ENCODE measurements at regions of chr19 and their contacts with region 1.

Region 1: GRCh38 chr19:6740589-6741343 is 1.3 kb downstream of the TRIP10 start:
- DNase-seq: peak; percentile 42 to 50 (median 49)
- ATAC-seq: no peak
- H3K4me3 ChIP-seq: peak overlapping the region; percentile 42 to 73
- H3K27ac ChIP-seq: peak overlapping the region; percentile 81 to 95 (median 88)
- H3K4me1 ChIP-seq: peaks cover 54% of the 10 kb centered on the region
- H3K27me3 ChIP-seq: no peaks in the 10 kb centered on the region
- CTCF ChIP-seq: no peak
- POLR2A ChIP-seq: peak in 1 of 3 donors; percentile 38

Region 2: GRCh38 chr19:6516659-6517291 is 224.0 kb before region 1 on chr19:
- intact Hi-C with region 1: loop called (anchors 10 kb)
- DNase-seq: peak; percentile 89 to 93 (median 92)
- ATAC-seq: peak; percentile 77
- H3K4me3 ChIP-seq: peak overlapping the region; percentile 29 to 46
- H3K27ac ChIP-seq: peak overlapping the region; percentile 73 to 86 (median 83)
- H3K4me1 ChIP-seq: peaks cover 8% of the 10 kb centered on the region
- H3K27me3 ChIP-seq: no peaks in the 10 kb centered on the region
- CTCF ChIP-seq: peak; percentile 86 to 99 (median 95)
- POLR2A ChIP-seq: peak in 2 of 3 donors; percentile 11 to 46

Measured in body of pancreas (tissue), 4 donors.